ENCODE measurements at regions of chr3 and their contacts with region 1.

Region 1: DNA sequence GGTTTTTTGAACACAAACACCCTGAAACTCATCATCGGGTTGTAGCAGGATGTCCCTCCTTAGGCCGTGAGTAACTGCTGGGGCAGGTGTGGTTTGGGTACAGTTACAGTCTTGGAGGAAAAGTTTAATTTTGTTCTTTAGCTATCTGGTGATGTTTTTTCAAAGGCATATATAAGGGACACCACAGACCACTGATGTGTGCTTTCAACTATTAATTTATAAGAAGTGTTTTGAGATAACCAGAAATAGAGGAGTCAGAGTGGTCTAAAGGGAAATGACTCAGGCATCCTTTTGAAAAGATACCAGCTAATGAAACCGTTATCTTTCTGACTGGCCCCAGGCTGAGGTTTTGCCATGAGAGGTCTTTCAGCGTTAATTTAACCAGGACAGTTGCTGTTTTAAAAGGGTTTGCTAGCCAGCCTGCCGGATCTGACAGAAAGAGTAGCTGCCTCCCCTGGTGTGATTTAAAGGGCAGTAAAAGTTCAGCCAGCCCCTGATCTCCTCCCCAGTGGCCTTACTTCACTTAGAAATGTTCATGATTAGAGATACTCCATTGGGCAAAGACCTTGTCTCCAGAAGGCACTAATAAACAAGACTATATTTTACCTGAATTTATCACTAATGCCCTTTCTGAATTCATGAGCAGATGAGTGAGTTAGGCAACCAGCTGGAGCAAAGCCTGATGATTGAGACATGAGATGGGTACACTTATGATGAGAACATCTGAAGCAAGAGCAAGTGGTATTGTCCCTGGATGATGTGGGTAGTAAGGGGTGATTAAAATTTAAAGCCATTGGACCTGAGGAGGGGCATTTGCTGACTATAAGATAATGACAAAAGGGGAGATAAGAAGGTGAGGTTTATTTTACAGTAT is 482.5 kb upstream of the TBL1XR1 start:
- DNase-seq: peak; percentile 9
- H3K4me3 Mint-ChIP-seq: no peak overlapping the region
- H3K27ac Mint-ChIP-seq: peak overlapping the region; percentile 24
- H3K4me1 Mint-ChIP-seq: peaks cover 22% of the 10 kb centered on the region
- H3K27me3 Mint-ChIP-seq: no peaks in the 10 kb centered on the region

Region 2: DNA sequence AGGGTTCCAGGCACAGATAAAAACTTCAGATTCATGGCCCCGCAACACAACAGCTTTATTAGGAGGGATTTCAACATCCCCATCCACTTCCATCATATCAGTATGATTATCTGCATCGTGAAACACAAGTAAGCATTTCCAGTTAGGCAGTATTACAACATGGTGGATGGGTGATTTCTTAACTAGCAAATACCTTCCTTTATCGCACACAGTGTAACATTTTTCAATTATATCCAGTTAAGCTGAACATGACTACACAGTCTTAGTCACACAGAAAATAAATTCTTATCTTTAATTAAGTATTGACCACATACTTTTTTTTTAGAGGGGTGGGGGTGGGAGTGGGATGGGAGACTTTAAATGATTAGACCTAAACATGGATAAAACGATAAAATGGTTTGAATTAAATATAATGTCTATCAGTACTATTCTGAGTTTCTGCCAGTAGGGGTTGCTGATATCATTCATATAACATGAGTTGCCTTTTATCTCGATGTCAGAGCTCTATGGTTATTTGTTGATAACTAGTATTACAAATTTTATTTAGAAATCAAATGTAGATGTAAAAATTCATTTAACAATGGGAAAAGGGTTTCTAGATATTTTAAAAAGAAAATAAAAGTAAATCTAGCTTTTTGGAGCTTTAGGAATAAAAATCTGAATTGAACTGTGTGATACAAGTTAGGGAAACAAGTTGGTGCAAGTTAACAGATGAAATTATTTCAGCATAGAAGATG is 629.1 kb before region 1 on chr3:
- intact Hi-C with region 1: loop called (anchors 10 kb)
- DNase-seq: no peak
- H3K4me3 Mint-ChIP-seq: no peak overlapping the region
- H3K27ac Mint-ChIP-seq: no peak overlapping the region
- H3K4me1 Mint-ChIP-seq: peaks cover 14% of the 10 kb centered on the region
- H3K27me3 Mint-ChIP-seq: no peaks in the 10 kb centered on the region

Region 3: GRCh38 chr3:177665122-177665808 is 14.5 kb before region 1 on chr3:
- intact Hi-C with region 1: no loop called
- DNase-seq: no peak
- H3K4me3 Mint-ChIP-seq: no peak overlapping the region
- H3K27ac Mint-ChIP-seq: no peak overlapping the region
- H3K4me1 Mint-ChIP-seq: no peaks in the 10 kb centered on the region
- H3K27me3 Mint-ChIP-seq: peaks cover 2% of the 10 kb centered on the region